ENCODE measurements at regions of chr12 and their contacts with region 1.

Region 1: GRCh38 chr12:52506858-52507715 is 13.1 kb downstream of the KRT5 start:
- DNase-seq: peak in 2 of 9 experiments; percentile 54 to 71
- ATAC-seq: peak; percentile 44
- H3K4me3 ChIP-seq: no peak overlapping the region
- H3K4me3 Mint-ChIP-seq: no peak overlapping the region
- H3K27ac ChIP-seq: no peak overlapping the region
- H3K27ac Mint-ChIP-seq: no peak overlapping the region
- H3K4me1 ChIP-seq: no peaks in the 10 kb centered on the region
- H3K4me1 Mint-ChIP-seq: no peaks in the 10 kb centered on the region
- H3K27me3 ChIP-seq: peaks cover 0 to 2% of the 10 kb centered on the region in 2 experiments
- H3K27me3 Mint-ChIP-seq: peaks cover 51% of the 10 kb centered on the region
- CTCF ChIP-seq: peak; percentile 26

Region 2: GRCh38 chr12:52156736-52157565 is 350.1 kb before region 1 on chr12:
- CTCF ChIA-PET with region 1: no interaction called
- POLR2A ChIA-PET with region 1: no interaction called
- intact Hi-C with region 1: loop called in 1 of 2 experiments (anchors 2 kb)
- DNase-seq: peak; percentile 53 to 77 (median 73)
- ATAC-seq: peak; percentile 35
- H3K4me3 ChIP-seq: no peak overlapping the region
- H3K4me3 Mint-ChIP-seq: no peak overlapping the region
- H3K27ac ChIP-seq: no peak overlapping the region
- H3K27ac Mint-ChIP-seq: no peak overlapping the region
- H3K4me1 ChIP-seq: peaks cover 33% of the 10 kb centered on the region
- H3K4me1 Mint-ChIP-seq: peaks cover 22% of the 10 kb centered on the region
- H3K27me3 ChIP-seq: no peaks in the 10 kb centered on the region
- H3K27me3 Mint-ChIP-seq: no peaks in the 10 kb centered on the region
- CTCF ChIP-seq: peak; percentile 66

Measured in CD8-positive, alpha-beta T cell (primary cell).